Activated CD4-positive, alpha-beta T cell treated with anti-CD3 and anti-CD28 coated beads for 36 hours (primary cell): ENCODE measurements at regions of chr12 and their contacts with region 1.

Region 1: DNA sequence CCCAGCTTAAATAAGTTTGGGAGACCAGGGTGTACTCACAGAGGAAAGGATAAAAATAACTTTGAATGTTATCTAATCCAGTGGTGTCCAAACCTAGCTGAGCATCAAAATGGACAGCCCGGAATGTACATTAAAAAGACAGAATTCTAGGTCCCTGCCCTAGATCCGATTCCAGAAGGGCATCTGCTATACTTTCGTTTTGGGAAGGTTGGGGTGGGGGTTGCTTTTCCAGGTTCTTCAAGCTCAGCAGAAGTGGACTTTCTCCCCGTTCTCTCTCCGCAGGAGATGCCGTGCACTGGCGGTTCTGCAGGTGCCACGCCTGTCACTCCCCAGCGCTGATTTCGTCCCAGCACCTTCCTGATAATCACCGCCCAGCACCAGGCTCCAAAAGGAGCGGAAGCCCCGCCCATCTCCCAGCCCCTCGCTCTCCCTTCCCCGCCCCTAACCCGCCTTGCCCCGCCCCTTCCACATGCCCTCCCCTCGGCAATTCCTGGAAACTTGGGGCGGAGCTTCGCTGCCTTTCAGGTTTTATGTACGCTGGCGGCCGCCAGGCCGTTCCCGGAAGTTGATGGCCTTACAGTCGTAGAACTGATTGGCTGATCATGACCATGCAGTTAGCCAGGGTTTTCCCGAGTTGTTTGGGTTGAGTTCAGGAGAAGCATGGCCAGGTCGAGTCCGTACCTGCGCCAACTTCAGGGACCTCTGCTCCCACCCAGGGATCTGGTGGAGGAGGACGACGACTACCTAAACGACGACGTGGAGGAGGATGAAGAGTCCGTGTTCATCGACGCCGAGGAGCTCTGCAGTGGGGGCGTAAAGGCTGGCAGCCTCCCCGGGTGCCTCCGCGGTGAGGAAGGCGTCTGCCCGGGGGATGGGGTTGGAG is at the start of gene HELB:
- DNase-seq: peak; percentile 99
- ATAC-seq: peak; percentile 83
- H3K4me3 Mint-ChIP-seq: peak within 1 kb of the TSS; percentile 96
- H3K27ac Mint-ChIP-seq: peak within 1 kb of the TSS; percentile 100
- H3K4me1 Mint-ChIP-seq: peaks cover 39% of the 10 kb centered on the region
- H3K27me3 Mint-ChIP-seq: no peaks in the 10 kb centered on the region
- total RNA-seq, gene HELB: 21.0 to 23.6 TPM

Region 2: GRCh38 chr12:64679487-64679983 is 1622.7 kb before region 1 on chr12:
- CTCF ChIA-PET with region 1: no interaction called
- POLR2A ChIA-PET with region 1: no interaction called
- intact Hi-C with region 1: loop called in 1 of 2 experiments (anchors 10 kb)
- DNase-seq: peak; percentile 79
- ATAC-seq: peak; percentile 59
- H3K4me3 Mint-ChIP-seq: peak overlapping the region; percentile 53
- H3K27ac Mint-ChIP-seq: peak overlapping the region; percentile 91
- H3K4me1 Mint-ChIP-seq: peaks cover 96% of the 10 kb centered on the region
- H3K27me3 Mint-ChIP-seq: no peaks in the 10 kb centered on the region

Region 3: GRCh38 chr12:66130277-66131066 is 171.7 kb before region 1 on chr12 and contains the start of gene LLPH:
- CTCF ChIA-PET with region 1: no interaction called
- POLR2A ChIA-PET with region 1: no interaction called
- intact Hi-C with region 1: loop called (anchors 1 kb)
- DNase-seq: peak; percentile 95
- ATAC-seq: peak; percentile 95
- H3K4me3 Mint-ChIP-seq: peak within 1 kb of the TSS; percentile 99
- H3K27ac Mint-ChIP-seq: peak within 1 kb of the TSS; percentile 96
- H3K4me1 Mint-ChIP-seq: peaks cover 46% of the 10 kb centered on the region
- H3K27me3 Mint-ChIP-seq: no peaks in the 10 kb centered on the region
- total RNA-seq, gene LLPH: 33.1 to 36.5 TPM

Region 4: GRCh38 chr12:66269757-66270383 is 32.3 kb before region 1 on chr12:
- CTCF ChIA-PET with region 1: interaction called, 4 read pairs
- POLR2A ChIA-PET with region 1: interaction called, 3 read pairs
- intact Hi-C with region 1: loop called in 1 of 2 experiments (anchors 2 kb)
- DNase-seq: peak; percentile 50
- ATAC-seq: peak; percentile 84
- H3K4me3 Mint-ChIP-seq: no peak overlapping the region
- H3K27ac Mint-ChIP-seq: no peak overlapping the region
- H3K4me1 Mint-ChIP-seq: peaks cover 4% of the 10 kb centered on the region
- H3K27me3 Mint-ChIP-seq: no peaks in the 10 kb centered on the region

Region 5: GRCh38 chr12:66312189-66312588 is 10.0 kb after region 1 on chr12:
- CTCF ChIA-PET with region 1: no interaction called
- POLR2A ChIA-PET with region 1: interaction called, 3 read pairs
- intact Hi-C with region 1: loop called in 1 of 2 experiments (anchors 1 kb)
- DNase-seq: no peak
- ATAC-seq: peak; percentile 64
- H3K4me3 Mint-ChIP-seq: no peak overlapping the region
- H3K27ac Mint-ChIP-seq: peak overlapping the region; percentile 59
- H3K4me1 Mint-ChIP-seq: peaks cover 66% of the 10 kb centered on the region
- H3K27me3 Mint-ChIP-seq: no peaks in the 10 kb centered on the region

Region 6: DNA sequence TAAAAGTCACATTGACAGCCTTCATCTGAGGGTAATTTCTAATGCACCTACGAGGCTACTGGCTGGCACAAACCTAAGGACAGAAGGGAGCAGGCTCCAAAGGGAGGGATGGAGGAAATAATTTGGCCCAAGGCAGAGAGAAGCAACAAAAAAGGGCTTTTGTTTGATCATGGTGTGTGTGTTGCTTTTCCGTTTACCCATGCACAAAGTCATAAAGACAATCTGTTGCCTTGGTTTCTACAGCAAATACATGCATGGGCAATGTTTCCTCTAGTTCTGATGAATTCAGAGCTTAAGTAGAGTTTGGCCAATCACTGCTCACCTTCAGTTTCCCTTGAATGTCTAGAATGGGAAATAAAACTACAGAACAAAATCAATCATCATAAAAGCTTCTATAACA is 704.4 kb after region 1 on chr12:
- CTCF ChIA-PET with region 1: no interaction called
- POLR2A ChIA-PET with region 1: no interaction called
- intact Hi-C with region 1: no loop called
- DNase-seq: no peak
- ATAC-seq: no peak
- H3K4me3 Mint-ChIP-seq: no peak overlapping the region
- H3K27ac Mint-ChIP-seq: no peak overlapping the region
- H3K4me1 Mint-ChIP-seq: no peaks in the 10 kb centered on the region
- H3K27me3 Mint-ChIP-seq: no peaks in the 10 kb centered on the region